Dendritic cell treated with granulocyte-macrophage colony-stimulating factor and Interleukin-4, amounts not matched to agents 40 ng/mL and 50 ng/mL, for 4 days (primary cell): ENCODE measurements at regions of chr19 and their contacts with region 1.

Region 1: GRCh38 chr19:36837906-36838783 is at the start of gene ZNF790:
- H3K4me3 Mint-ChIP-seq: no peak within 1 kb of the TSS
- H3K27ac Mint-ChIP-seq: no peak within 1 kb of the TSS
- H3K4me1 Mint-ChIP-seq: no peaks in the 10 kb centered on the region
- H3K27me3 Mint-ChIP-seq: no peaks in the 10 kb centered on the region

Region 2: DNA sequence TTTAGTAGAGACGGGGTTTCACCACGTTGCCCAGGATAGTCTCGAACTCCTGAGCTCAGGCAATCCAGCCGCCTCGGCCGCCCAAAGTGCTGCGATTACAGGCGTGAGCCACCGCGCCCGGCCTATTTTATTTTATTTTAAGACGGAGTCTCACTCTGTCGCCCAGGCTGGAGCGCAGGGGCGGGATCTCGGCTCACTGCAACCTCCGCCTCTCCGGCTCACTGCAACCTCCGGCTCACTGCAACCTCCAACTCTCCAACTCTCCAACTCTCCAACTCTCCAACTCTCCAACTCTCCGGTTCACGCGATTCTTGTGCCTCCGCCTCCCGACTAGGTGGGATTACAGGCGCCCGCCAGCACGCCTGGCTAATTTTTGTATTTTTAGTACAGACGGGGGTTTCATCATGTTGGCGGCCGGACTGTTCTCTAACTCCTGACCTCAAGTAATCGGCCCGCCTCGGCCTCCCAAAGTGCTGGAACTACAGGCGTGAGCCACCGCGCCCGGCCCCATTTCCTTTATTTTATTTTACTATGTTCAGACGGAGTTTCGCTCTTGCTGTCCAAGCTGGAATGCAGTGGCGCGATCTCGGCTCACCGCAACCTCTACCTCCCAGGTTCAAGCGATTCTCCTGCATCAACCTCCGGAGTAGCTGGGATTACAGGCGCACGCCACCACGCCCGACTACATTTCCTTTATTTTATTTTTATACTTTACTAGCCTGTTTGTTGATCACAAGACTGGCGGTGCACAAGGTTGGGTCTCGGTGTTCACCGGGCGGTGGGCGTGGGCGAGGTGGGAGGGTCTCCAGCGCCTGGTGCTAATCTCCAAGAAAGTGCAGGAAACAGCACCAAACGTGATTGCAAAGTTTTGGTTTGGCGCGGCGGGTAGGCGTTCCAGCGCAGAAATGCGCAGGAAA is 41.8 kb before region 1 on chr19:
- intact Hi-C with region 1: no loop called
- H3K4me3 Mint-ChIP-seq: peak overlapping the region; percentile 88
- H3K27ac Mint-ChIP-seq: peak overlapping the region; percentile 95
- H3K4me1 Mint-ChIP-seq: no peaks in the 10 kb centered on the region
- H3K27me3 Mint-ChIP-seq: peaks cover 9% of the 10 kb centered on the region

Region 3: GRCh38 chr19:36915992-36916830 is 78.1 kb after region 1 on chr19 and contains the starts of genes ZNF568 and ZNF829:
- intact Hi-C with region 1: loop called (anchors 5 kb)
- H3K4me3 Mint-ChIP-seq: peak within 1 kb of the TSS; percentile 84
- H3K27ac Mint-ChIP-seq: peak within 1 kb of the TSS; percentile 94
- H3K4me1 Mint-ChIP-seq: peaks cover 22% of the 10 kb centered on the region
- H3K27me3 Mint-ChIP-seq: no peaks in the 10 kb centered on the region